Naive thymus-derived CD4-positive, alpha-beta T cell (primary cell): ENCODE measurements at regions of chr9 and their contacts with region 1.

Region 1: DNA sequence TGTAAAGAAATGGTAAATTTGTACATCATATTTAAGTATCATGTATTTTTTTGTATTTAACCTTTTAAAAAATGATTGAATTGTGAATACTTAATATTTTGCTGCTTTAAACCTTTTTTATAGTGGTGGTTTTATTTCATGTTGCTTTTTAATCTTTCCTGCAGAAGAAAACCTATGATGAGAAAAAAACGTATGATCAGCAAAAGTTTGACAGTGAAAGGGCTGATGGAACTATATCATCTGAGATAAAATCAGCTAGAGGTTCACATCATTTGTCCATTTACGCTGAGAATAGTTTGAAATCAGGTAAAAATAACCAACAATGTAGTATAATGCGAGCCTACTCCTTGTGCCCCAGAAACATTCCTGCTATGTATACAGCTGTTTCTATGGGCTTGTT is 7.4 kb downstream of the SECISBP2 start:
- DNase-seq: no peak
- ATAC-seq: no peak
- H3K4me3 ChIP-seq: no peak overlapping the region
- H3K4me3 Mint-ChIP-seq: no peak overlapping the region
- H3K27ac ChIP-seq: no peak overlapping the region
- H3K27ac Mint-ChIP-seq: no peak overlapping the region
- H3K4me1 ChIP-seq: peaks cover 5 to 13% of the 10 kb centered on the region in 2 donors
- H3K4me1 Mint-ChIP-seq: peaks cover 25 to 56% (median 51%) of the 10 kb centered on the region in 7 donors
- H3K27me3 ChIP-seq: no peaks in the 10 kb centered on the region
- H3K27me3 Mint-ChIP-seq: no peaks in the 10 kb centered on the region

Region 2: GRCh38 chr9:88388172-88388885 is 937.4 kb before region 1 on chr9 and contains the start of gene SPIN1:
- CTCF ChIA-PET with region 1: no interaction called
- POLR2A ChIA-PET with region 1: no interaction called
- intact Hi-C with region 1: no loop called
- DNase-seq: peak; percentile 66 to 94 (median 87)
- ATAC-seq: peak; percentile 87
- H3K4me3 ChIP-seq: peak within 1 kb of the TSS; percentile 97
- H3K4me3 Mint-ChIP-seq: peak within 1 kb of the TSS; percentile 91 to 98 (median 95)
- H3K27ac ChIP-seq: peak within 1 kb of the TSS; percentile 67
- H3K27ac Mint-ChIP-seq: peak within 1 kb of the TSS; percentile 90 to 97 (median 95)
- H3K4me1 ChIP-seq: peaks cover 8 to 11% of the 10 kb centered on the region in 2 donors
- H3K4me1 Mint-ChIP-seq: peaks cover 23 to 49% (median 43%) of the 10 kb centered on the region in 7 donors
- H3K27me3 ChIP-seq: no peaks in the 10 kb centered on the region
- H3K27me3 Mint-ChIP-seq: no peaks in the 10 kb centered on the region
- total RNA-seq, gene SPIN1: 27.5 to 38.4 (median 34.9) TPM

Region 3: DNA sequence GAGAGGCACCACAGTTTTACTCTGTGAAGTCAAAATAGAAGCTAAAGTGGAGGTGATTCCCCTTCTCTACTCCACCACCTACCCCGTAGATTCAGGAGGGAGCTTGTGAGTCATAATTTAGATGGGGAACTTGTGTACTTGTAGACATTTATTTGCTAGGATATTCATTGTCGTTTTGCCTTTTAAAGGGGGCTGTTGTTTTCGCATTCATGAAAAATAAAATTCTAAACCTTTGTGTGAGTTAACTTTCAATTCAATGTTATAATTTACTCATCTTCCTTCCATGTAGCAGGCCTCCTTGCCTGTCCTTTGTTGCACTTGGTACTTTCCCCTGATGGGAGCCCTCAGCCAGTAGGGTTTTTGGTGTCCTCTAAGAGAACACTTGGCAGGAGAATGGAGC is 14.6 kb after region 1 on chr9:
- CTCF ChIA-PET with region 1: no interaction called
- POLR2A ChIA-PET with region 1: interaction called, 3 read pairs
- intact Hi-C with region 1: loop called in 1 of 2 experiments (anchors 2 kb)
- DNase-seq: no peak
- ATAC-seq: no peak
- H3K4me3 ChIP-seq: no peak overlapping the region
- H3K4me3 Mint-ChIP-seq: no peak overlapping the region
- H3K27ac ChIP-seq: no peak overlapping the region
- H3K27ac Mint-ChIP-seq: peak overlapping the region in 4 of 9 donors; percentile 23 to 51 (median 36)
- H3K4me1 ChIP-seq: no peaks in the 10 kb centered on the region
- H3K4me1 Mint-ChIP-seq: peaks cover 8 to 27% (median 21%) of the 10 kb centered on the region in 7 donors
- H3K27me3 ChIP-seq: no peaks in the 10 kb centered on the region
- H3K27me3 Mint-ChIP-seq: no peaks in the 10 kb centered on the region

Region 4: DNA sequence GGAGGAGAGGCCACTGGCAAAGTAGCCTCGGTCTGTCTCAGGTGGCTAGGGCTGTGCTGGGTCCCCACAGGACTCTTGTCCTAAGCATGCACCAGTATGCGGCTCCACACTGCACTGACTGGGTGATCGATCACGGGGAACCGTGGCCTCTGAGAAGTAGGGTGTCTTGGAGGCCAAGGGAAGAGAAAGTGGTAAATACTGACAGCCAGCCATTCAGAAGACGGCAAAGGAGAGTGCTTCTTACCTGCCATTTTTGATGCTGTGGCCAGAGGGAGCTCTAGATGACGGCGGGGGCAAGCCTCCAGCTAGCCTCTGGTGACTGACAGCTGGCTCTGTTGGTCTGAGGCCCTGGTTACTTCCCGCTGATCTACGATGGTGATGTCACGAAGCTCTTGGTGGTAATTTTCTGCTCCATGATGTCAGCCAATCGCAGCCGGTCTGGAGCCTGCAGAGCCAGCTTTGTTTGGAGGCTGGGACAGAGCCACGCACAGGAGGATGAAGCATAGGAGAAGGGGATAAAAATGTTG is 238.7 kb after region 1 on chr9:
- CTCF ChIA-PET with region 1: no interaction called
- POLR2A ChIA-PET with region 1: no interaction called
- intact Hi-C with region 1: no loop called
- DNase-seq: no peak
- ATAC-seq: no peak
- H3K4me3 ChIP-seq: no peak overlapping the region
- H3K4me3 Mint-ChIP-seq: no peak overlapping the region
- H3K27ac ChIP-seq: no peak overlapping the region
- H3K27ac Mint-ChIP-seq: peak overlapping the region in 1 of 9 donors; percentile 62
- H3K4me1 ChIP-seq: no peaks in the 10 kb centered on the region
- H3K4me1 Mint-ChIP-seq: peaks cover 0 to 5% (median 0%) of the 10 kb centered on the region in 7 donors
- H3K27me3 ChIP-seq: no peaks in the 10 kb centered on the region
- H3K27me3 Mint-ChIP-seq: peaks cover 0 to 35% (median 0%) of the 10 kb centered on the region in 5 donors